PC-9 (cell line): ENCODE measurements at regions of chr20 and their contacts with region 1.

Region 1: DNA sequence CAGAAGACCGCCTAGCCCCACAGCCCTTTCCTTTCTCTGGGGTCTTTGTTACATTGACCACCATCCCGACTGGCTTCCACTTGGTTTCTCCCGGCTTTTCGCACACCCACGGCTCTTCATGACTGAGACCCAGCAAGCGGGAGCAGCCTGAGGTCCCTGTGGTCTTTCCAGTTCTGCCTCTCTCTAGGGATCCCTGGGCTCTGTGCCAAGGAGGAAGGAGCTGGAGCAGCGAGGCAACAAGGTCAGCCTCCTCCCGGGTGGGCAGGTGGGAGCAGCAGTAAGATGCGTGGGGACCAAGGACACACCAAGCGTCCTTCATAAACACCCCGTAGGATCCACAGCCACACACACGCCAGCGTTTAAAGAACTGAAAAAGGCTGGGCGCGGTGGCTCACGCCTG is 29.6 kb upstream of the MRGBP start:
- DNase-seq: peak; percentile 78 to 85
- H3K4me3 ChIP-seq: peak overlapping the region; percentile 10; the same call in 1 of the 2 replicates
- H3K27ac ChIP-seq: no peak overlapping the region
- H3K4me1 ChIP-seq: peaks cover 39% of the 10 kb centered on the region
- H3K27me3 ChIP-seq: 0 out of 2 replicates have a peak, but pooled peaks cover 5% of the 10 kb centered on the region
- CTCF ChIP-seq: no peak

Region 2: DNA sequence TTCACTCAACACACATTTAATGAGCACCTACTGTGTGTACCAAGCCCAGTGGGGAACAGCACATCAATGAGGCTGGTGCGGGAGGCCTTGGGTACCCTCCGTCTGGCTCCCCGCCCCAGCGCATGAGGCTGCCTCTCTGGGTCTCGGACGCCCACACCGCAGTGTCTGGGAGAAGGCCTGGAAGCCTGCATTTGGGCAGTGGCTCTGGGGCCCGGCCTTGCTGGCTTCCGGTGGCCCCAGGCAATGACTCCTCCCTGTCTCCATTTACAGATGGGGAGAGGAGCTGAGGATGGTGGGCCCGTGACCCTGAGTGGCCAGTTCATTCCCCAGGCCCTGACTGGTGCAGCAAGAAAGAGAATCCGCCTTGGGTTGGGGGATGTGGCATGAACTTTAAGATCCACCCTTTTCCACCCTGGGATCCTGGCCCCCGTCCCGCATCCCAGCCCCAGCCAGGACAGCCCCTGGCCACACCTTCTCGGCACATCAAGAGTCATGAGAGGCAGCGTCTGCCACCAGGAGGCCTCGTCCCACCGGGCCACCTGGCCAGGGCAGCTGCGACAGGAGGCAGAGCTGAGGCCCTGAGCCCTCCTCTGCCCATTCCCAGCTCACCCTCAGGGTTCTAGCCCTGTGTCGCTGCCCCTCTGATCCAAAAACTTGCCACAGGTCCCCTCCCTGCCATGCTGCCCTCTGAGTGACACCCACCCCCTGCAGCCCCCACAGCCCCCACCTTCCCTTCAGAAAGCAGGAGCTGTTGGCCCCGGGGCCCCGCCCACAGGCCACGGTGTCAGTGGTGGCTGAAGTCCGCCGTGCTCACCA is 12.1 kb after region 1 on chr20:
- CTCF ChIA-PET with region 1: no interaction called
- POLR2A ChIA-PET with region 1: interaction called, 16 read pairs
- intact Hi-C with region 1: no loop called
- DNase-seq: no peak
- H3K4me3 ChIP-seq: no peak overlapping the region
- H3K27ac ChIP-seq: no peak overlapping the region
- H3K4me1 ChIP-seq: peaks cover 16% of the 10 kb centered on the region
- H3K27me3 ChIP-seq: no peaks in the 10 kb centered on the region
- CTCF ChIP-seq: no peak